PC-9 (cell line): ENCODE measurements at regions of chr5 and their contacts with region 1.

Region 1: GRCh38 chr5:43997647-43998251 is 391.5 kb downstream of the FGF10 start:
- DNase-seq: no peak
- H3K4me3 ChIP-seq: no peak overlapping the region
- H3K27ac ChIP-seq: no peak overlapping the region
- H3K4me1 ChIP-seq: no peaks in the 10 kb centered on the region
- H3K27me3 ChIP-seq: no peaks in the 10 kb centered on the region
- CTCF ChIP-seq: no peak

Region 2: DNA sequence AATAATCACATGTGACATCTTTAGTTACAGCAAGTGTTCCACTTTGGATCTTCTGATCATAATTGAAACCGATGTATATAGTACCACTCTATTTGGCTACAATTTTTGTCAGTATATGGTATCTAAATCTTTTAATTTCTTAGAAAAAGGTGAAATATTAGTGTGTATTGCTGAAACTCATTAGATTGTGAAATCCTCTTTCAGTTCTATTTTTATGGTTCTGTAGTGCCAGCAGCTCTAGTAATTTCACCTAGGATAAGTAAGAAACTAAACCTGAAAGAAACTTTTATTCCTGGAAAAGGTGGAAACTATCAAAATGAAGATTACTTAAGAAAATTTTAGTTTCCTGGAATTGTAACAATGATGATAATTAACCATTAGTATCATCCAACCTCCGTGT is 23.8 kb before region 1 on chr5:
- CTCF ChIA-PET with region 1: no interaction called
- POLR2A ChIA-PET with region 1: no interaction called
- intact Hi-C with region 1: loop called (anchors 1 kb)
- DNase-seq: no peak
- H3K4me3 ChIP-seq: no peak overlapping the region
- H3K27ac ChIP-seq: no peak overlapping the region
- H3K4me1 ChIP-seq: no peaks in the 10 kb centered on the region
- H3K27me3 ChIP-seq: no peaks in the 10 kb centered on the region
- CTCF ChIP-seq: no peak